PC-9 (cell line): ENCODE measurements at regions of chr16 and their contacts with region 1.

Region 1: DNA sequence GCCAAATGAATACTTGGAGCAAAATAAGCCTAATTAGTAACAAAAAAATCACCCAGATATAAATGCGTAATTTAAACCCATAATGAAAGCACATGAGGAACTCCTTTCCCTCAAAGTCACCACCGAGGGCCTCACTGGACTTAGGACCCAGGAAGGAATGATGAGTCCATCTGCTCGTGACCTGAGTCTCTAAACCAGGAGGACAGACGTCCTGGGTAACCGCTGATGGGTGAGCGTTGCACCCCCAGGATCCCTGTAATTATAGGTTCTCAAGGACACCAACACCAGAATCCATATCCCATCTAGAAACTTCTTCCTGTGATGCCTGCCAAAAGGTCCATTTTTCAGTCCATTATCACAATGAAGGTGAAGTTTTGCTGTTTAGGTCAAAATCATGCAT is 121.4 kb downstream of the ZNF778 start:
- DNase-seq: no peak
- H3K4me3 ChIP-seq: no peak overlapping the region
- H3K27ac ChIP-seq: no peak overlapping the region
- H3K4me1 ChIP-seq: peaks cover 17% of the 10 kb centered on the region
- H3K27me3 ChIP-seq: no peaks in the 10 kb centered on the region
- CTCF ChIP-seq: no peak

Region 2: DNA sequence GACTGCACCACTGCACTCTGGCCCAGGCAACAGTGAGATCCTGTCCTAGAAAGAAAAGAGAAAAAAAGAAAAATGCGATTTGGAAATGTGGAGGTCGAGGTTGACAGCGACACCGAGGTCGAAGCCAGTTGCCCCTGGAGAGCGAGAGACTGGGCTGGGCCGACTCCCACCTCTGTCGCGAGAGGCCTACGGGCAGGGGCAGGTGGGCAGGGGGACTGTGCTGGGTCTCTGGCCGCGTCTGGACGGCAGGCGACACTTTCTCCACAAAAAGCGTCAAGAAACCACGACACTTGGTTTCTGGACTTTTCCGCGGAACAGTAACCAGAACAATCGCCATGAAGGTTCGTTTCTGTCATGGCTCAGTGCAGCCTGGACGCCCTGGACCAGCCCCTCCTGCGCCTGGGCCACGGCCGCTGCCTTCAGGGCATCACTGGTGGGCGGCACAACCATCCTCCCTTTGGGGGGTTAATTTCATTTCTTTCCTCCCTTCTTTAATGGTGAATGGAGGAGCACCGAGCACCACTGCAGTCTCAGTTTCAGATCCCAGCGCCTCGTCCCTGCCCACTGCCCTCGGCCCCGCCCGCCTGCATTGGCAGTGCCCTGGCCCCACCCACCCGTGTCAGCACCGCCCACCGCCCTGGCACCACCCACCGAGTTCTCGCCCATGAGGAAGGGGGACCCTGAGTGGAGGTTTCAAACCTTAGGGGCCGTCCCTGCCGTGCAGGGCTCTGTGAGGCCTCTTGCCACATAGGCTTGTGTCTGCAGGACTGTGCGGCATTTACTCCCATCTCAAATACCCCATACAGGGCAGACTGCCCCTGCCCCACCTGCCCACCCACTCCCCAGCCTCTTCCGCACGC is 185.8 kb before region 1 on chr16:
- CTCF ChIA-PET with region 1: no interaction called
- POLR2A ChIA-PET with region 1: interaction called, 24 read pairs
- intact Hi-C with region 1: no loop called
- DNase-seq: no peak
- H3K4me3 ChIP-seq: no peak overlapping the region
- H3K27ac ChIP-seq: no peak overlapping the region
- H3K4me1 ChIP-seq: no peaks in the 10 kb centered on the region; the same call in 1 of the 2 replicates
- H3K27me3 ChIP-seq: no peaks in the 10 kb centered on the region
- CTCF ChIP-seq: no peak

Region 3: GRCh38 chr16:89300311-89300975 is 38.4 kb before region 1 on chr16:
- CTCF ChIA-PET with region 1: no interaction called
- POLR2A ChIA-PET with region 1: no interaction called
- intact Hi-C with region 1: no loop called
- DNase-seq: no peak
- H3K4me3 ChIP-seq: no peak overlapping the region
- H3K27ac ChIP-seq: no peak overlapping the region
- H3K4me1 ChIP-seq: peaks cover 15% of the 10 kb centered on the region
- H3K27me3 ChIP-seq: no peaks in the 10 kb centered on the region
- CTCF ChIP-seq: no peak